Mammary epithelial cell (primary cell): ENCODE measurements at regions of chr1 and their contacts with region 1.

Region 1: DNA sequence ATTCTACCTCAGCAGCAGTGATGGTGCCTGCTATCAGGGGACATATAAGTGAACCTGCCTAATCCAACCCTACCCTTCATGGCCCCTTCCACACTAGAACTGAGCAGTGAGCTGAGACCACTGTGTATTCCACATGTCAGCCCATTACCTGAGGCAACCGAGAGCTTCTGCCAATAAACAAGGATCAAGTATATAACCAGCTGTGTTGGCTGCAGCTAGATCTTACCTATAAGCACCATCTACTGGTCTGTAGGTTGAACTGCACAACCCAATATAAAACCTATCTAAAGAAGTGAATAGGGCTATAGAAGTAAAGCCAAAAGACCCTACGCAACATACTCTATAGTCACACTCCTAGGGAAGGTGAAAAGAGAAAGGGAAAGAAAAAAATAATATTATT is 376.9 kb downstream of the HHIPL2 start:
- DNase-seq: peak; percentile 51
- H3K4me3 ChIP-seq: no peak overlapping the region
- H3K27ac ChIP-seq: no peak overlapping the region
- H3K4me1 ChIP-seq: peaks cover 16% of the 10 kb centered on the region
- H3K27me3 ChIP-seq: no peaks in the 10 kb centered on the region
- CTCF ChIP-seq: peak; percentile 71 to 72

Region 2: GRCh38 chr1:221435504-221435904 is 735.5 kb before region 1 on chr1:
- CTCF ChIA-PET with region 1: interaction called, 9 read pairs
- dilution Hi-C with region 1: no loop called
- in situ Hi-C with region 1: no loop called
- intact Hi-C with region 1: loop called (anchors 1 kb)
- DNase-seq: peak; percentile 37
- H3K4me3 ChIP-seq: no peak overlapping the region
- H3K27ac ChIP-seq: no peak overlapping the region
- H3K4me1 ChIP-seq: peaks cover 19% of the 10 kb centered on the region
- H3K27me3 ChIP-seq: no peaks in the 10 kb centered on the region
- CTCF ChIP-seq: peak; percentile 87 to 96

Region 3: GRCh38 chr1:221741711-221742554 is 429.1 kb before region 1 on chr1 and contains the start of gene DUSP10:
- CTCF ChIA-PET with region 1: interaction called, 4 read pairs
- dilution Hi-C with region 1: no loop called
- in situ Hi-C with region 1: loop called (anchors 5 to 10 kb)
- intact Hi-C with region 1: loop called (anchors 1 kb)
- DNase-seq: peak; percentile 99
- H3K4me3 ChIP-seq: peak within 1 kb of the TSS; percentile 63 to 85 (median 80)
- H3K27ac ChIP-seq: peak within 1 kb of the TSS; percentile 96
- H3K4me1 ChIP-seq: peaks cover 35% of the 10 kb centered on the region
- H3K27me3 ChIP-seq: no peaks in the 10 kb centered on the region
- CTCF ChIP-seq: no peak
- total RNA-seq, gene DUSP10: 35.4 to 118 TPM

Region 4: DNA sequence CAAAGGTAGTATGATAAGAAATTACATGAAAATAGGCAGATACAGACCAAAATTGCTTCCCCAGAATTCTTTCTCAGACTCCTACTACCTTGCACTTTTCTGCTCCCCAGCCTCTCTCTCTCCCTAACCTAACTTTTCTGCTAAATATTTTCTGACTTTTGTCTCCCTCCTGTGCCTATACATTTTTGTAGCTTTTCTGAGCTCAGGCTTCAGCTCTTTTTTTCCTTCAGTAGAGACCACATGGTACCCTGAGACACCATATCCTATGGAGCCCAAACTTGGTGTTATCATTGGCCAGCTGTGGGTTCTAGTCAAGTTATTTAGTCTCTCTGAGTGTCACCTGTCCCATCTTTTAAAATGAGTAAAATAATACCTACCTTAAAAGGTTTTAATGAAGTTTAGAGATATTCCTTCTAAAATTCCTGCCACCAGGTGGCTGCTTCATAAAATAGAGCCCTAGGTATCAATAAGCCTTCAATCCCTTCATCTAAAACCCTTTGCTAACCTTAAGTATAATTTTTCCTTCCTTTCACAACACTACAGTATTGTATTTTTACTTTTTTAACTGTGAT is 191.5 kb before region 1 on chr1:
- CTCF ChIA-PET with region 1: interaction called, 4 read pairs
- dilution Hi-C with region 1: no loop called
- in situ Hi-C with region 1: no loop called
- intact Hi-C with region 1: loop called (anchors 2 kb)
- DNase-seq: no peak
- H3K4me3 ChIP-seq: no peak overlapping the region
- H3K27ac ChIP-seq: no peak overlapping the region
- H3K4me1 ChIP-seq: peaks cover 14% of the 10 kb centered on the region
- H3K27me3 ChIP-seq: no peaks in the 10 kb centered on the region
- CTCF ChIP-seq: peak; percentile 36 to 41

Region 5: DNA sequence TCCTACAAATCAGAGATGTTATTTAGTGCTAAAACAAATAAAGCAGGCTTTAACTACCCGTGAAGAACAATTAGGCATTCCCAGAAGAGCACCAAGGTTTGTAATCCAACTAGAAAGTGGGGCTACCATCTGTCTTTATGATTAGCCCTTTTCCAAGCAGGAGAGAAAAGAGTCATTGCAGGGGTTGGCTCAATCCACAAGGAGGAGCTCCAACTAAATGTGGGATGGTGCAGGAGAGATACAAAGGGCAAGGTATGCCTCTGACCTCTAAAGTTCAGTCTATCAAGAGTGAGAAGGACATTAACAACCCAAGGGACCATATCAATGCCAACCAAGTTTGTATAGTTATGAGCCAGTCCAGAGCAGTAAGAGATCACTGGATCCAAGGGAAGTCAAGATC is 46.4 kb before region 1 on chr1:
- CTCF ChIA-PET with region 1: no interaction called
- dilution Hi-C with region 1: no loop called
- in situ Hi-C with region 1: no loop called
- intact Hi-C with region 1: loop called (anchors 1 kb)
- DNase-seq: no peak
- H3K4me3 ChIP-seq: no peak overlapping the region
- H3K27ac ChIP-seq: no peak overlapping the region
- H3K4me1 ChIP-seq: no peaks in the 10 kb centered on the region
- H3K27me3 ChIP-seq: no peaks in the 10 kb centered on the region
- CTCF ChIP-seq: peak; percentile 30 to 71